ENCODE measurements at regions of chr14 and their contacts with region 1.

Region 1: GRCh38 chr14:70359181-70360090 is at the start of gene COX16:
- DNase-seq: peak; percentile 91
- ATAC-seq: peak; percentile 95
- H3K4me3 Mint-ChIP-seq: peak within 1 kb of the TSS; percentile 100
- H3K27ac Mint-ChIP-seq: peak within 1 kb of the TSS; percentile 90
- H3K4me1 Mint-ChIP-seq: peaks cover 37% of the 10 kb centered on the region
- H3K27me3 Mint-ChIP-seq: no peaks in the 10 kb centered on the region
- total RNA-seq, gene COX16: 56.1 to 68.9 TPM

Region 2: DNA sequence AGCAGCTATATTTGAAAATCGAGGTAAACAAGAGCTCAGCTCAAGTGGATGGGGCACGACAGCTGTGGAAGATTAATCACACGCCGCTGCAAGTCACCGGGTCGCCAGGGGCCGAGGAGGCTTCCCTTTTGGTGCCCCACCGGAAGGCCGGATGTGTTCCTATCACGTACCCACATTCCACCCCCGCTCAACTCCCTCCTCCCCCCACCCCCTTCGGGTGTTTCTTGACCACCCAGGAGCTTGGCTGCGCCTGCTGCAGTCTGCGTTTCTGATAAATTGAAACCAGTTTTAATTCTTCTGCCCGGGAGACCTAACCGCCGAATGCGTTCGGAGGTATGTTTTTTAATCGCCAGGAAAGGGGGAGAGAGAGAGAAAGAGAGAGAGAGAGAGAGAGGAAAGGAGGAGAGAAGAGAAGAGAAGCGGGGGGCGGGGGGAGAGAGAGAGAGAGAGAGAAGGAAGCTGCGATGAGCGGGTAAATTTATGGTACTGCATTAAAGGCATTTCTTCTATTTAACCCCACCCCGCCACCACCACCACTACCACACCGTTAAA is 172.5 kb before region 1 on chr14:
- CTCF ChIA-PET with region 1: no interaction called
- POLR2A ChIA-PET with region 1: no interaction called
- intact Hi-C with region 1: loop called in 1 of 2 experiments (anchors 1 kb)
- DNase-seq: peak; percentile 53
- ATAC-seq: no peak
- H3K4me3 Mint-ChIP-seq: peak overlapping the region; percentile 71
- H3K27ac Mint-ChIP-seq: peak overlapping the region; percentile 40
- H3K4me1 Mint-ChIP-seq: peaks cover 19% of the 10 kb centered on the region
- H3K27me3 Mint-ChIP-seq: peaks cover 49% of the 10 kb centered on the region

Region 3: DNA sequence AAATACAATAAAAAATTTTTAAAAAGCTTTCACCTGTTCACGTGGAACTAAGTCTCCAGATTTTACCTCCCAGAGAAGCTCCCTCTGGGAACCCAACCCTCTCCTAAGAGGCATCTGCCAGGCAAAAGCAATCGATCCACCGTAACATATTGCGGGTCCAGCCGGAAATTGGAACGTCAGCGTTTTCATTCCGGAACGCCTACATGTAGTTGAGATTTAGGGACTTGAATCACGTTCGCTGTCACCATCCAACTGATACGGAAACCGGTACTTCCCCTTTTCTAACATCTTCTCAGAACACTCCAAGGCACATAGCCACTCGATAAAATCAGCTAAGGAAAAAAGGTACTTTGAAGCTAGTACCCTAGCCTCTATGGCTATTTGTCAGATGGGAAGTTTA is 70.3 kb before region 1 on chr14:
- CTCF ChIA-PET with region 1: interaction called, 10 read pairs
- POLR2A ChIA-PET with region 1: interaction called, 5 read pairs
- intact Hi-C with region 1: loop called (anchors 1 kb)
- DNase-seq: peak; percentile 77
- ATAC-seq: peak; percentile 96
- H3K4me3 Mint-ChIP-seq: no peak overlapping the region
- H3K27ac Mint-ChIP-seq: no peak overlapping the region
- H3K4me1 Mint-ChIP-seq: peaks cover 2% of the 10 kb centered on the region
- H3K27me3 Mint-ChIP-seq: peaks cover 4% of the 10 kb centered on the region

Region 4: GRCh38 chr14:70416725-70417349 is 57.4 kb after region 1 on chr14 and contains the start of gene SYNJ2BP:
- CTCF ChIA-PET with region 1: no interaction called
- POLR2A ChIA-PET with region 1: no interaction called
- intact Hi-C with region 1: loop called in 1 of 2 experiments (anchors 2 kb)
- DNase-seq: peak; percentile 74
- ATAC-seq: peak; percentile 84
- H3K4me3 Mint-ChIP-seq: peak within 1 kb of the TSS; percentile 99
- H3K27ac Mint-ChIP-seq: peak within 1 kb of the TSS; percentile 88
- H3K4me1 Mint-ChIP-seq: peaks cover 32% of the 10 kb centered on the region
- H3K27me3 Mint-ChIP-seq: peaks cover under 1% of the 10 kb centered on the region
- total RNA-seq, gene SYNJ2BP: 7.5 to 8.2 TPM

Region 5: DNA sequence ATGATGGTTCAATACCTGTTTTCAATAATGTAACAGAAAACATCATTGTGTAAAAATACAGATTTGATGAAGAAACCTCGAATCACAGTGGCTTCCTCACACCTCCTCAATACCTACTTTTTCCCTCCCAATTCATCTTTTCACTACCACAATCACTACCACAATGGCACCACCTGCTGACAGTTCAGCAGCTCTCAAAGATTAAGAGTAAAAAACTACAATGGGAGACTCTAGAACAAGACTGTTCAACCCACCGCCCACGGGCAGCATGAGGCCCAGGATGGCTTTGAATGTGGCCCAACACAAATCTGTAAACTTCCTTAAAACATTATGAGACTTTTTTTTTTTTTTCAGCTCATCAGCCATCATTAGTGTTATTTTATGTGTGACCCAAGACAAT is 225.8 kb after region 1 on chr14:
- CTCF ChIA-PET with region 1: no interaction called
- POLR2A ChIA-PET with region 1: no interaction called
- intact Hi-C with region 1: loop called in 1 of 2 experiments (anchors 5 kb)
- DNase-seq: peak; percentile 68
- ATAC-seq: peak; percentile 75
- H3K4me3 Mint-ChIP-seq: no peak overlapping the region
- H3K27ac Mint-ChIP-seq: peak overlapping the region; percentile 12
- H3K4me1 Mint-ChIP-seq: peaks cover 6% of the 10 kb centered on the region
- H3K27me3 Mint-ChIP-seq: no peaks in the 10 kb centered on the region

Region 6: DNA sequence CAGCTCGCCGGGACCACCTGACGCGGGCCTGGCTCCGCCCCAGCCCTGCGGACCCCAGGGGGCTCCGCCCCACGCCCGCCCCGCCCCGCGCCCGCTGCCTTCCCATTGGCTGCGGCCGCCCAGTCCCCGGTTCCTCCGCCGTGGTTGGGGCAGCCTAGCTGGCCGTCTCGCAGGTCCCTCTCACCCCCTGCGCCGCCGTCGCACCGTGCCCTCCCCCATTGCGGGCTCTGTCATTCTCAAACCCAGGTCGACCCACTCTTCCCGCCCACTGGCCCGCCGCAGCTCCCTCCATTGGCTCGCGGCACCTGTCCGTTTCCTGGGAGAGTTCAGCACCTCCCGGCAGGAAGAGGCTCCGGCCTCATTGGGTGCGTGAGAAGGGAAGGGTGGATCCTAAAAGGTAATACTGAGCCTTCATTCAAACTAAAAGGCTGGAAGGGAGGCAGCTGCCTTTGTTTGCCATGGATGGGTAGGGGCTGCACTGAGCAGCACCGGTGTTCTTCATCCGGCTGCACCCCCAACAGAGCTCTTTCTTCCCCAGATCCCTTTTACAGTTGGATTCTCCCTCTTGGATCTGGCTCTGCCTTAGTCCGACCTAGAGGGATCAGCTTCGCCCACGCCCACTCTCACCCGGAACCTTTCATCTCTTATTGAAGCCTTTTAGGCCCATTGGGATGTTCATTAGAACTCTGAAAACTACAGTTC is 450.3 kb after region 1 on chr14:
- CTCF ChIA-PET with region 1: no interaction called
- POLR2A ChIA-PET with region 1: interaction called, 3 read pairs
- intact Hi-C with region 1: loop called in 1 of 2 experiments (anchors 2 kb)
- DNase-seq: peak; percentile 96
- ATAC-seq: peak; percentile 87
- H3K4me3 Mint-ChIP-seq: no peak overlapping the region
- H3K27ac Mint-ChIP-seq: peak overlapping the region; percentile 20
- H3K4me1 Mint-ChIP-seq: peaks cover 4% of the 10 kb centered on the region
- H3K27me3 Mint-ChIP-seq: no peaks in the 10 kb centered on the region